ENCODE measurements at regions of chr16 and their contacts with region 1.

Region 1: DNA sequence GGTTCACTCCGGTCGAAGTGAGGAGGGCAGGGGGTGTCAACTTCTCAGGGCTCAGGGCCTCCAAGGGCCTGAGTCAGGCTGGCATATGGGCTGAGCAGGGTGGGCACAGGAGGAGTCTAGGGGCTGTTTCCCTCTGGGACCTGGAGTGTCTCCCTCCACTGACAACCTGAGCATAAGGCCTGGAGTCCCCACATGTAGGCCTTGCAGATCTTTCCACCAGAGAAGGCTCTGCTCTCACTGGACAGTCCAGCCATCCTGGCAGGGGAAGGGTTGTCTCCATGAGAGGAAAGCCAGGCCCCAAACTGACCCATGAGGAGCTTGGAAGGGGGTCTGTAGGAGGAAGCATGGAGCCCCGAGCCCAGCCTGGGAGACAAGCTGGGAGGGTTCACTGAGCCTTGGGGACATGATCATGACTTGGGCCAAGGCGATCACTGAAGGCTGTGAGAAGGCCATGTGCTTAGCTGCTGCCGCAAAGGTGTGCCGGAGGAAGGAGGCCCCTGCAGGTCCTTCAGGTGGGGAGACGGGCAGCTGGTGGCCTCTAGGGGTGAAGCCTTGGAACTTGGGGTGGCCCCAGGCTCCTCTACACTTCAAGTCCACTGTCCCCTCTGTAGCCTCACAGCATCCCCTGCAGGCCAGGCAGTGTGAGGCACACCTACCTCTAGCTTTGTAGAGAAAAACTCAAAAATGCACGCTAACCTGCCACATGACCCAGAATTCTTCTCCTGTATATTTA is 9.9 kb downstream of the CMTM2 start:
- DNase-seq: peak; percentile 54
- H3K4me3 Mint-ChIP-seq: peak overlapping the region; percentile 73
- H3K27ac Mint-ChIP-seq: peak overlapping the region; percentile 49
- H3K4me1 Mint-ChIP-seq: peaks cover 42% of the 10 kb centered on the region
- H3K27me3 Mint-ChIP-seq: peaks cover 3% of the 10 kb centered on the region

Region 2: GRCh38 chr16:66516808-66517585 is 72.2 kb before region 1 on chr16:
- intact Hi-C with region 1: loop called (anchors 2 kb)
- DNase-seq: peak; percentile 84
- H3K4me3 Mint-ChIP-seq: peak overlapping the region; percentile 88
- H3K27ac Mint-ChIP-seq: peak overlapping the region; percentile 99
- H3K4me1 Mint-ChIP-seq: peaks cover 78% of the 10 kb centered on the region
- H3K27me3 Mint-ChIP-seq: no peaks in the 10 kb centered on the region

Measured in activated T-helper 1 cell treated with anti-CD3 and anti-CD28 coated beads, Interleukin-12 subunit alpha, Interleukin-12 subunit beta, Interleukin-2, Interleukin-4 antibody, amounts not matched to agents 30 ng/mL and 10 ng/mL and 1 ng/mL, durations not matched to agents 14 hours and 24 hours and 36 hours (primary cell).